Activated T-helper 2 cell treated with anti-CD3 and anti-CD28 coated beads, Interferon-gamma antibody, Interleukin-2, Interleukin-4, amounts not matched to agents 10 μg/mL and 5 μg/mL and 100 μg/mL, durations not matched to agents 14 hours and 24 hours and 36 hours (primary cell): ENCODE measurements at regions of chr12 and their contacts with region 1.

Region 1: DNA sequence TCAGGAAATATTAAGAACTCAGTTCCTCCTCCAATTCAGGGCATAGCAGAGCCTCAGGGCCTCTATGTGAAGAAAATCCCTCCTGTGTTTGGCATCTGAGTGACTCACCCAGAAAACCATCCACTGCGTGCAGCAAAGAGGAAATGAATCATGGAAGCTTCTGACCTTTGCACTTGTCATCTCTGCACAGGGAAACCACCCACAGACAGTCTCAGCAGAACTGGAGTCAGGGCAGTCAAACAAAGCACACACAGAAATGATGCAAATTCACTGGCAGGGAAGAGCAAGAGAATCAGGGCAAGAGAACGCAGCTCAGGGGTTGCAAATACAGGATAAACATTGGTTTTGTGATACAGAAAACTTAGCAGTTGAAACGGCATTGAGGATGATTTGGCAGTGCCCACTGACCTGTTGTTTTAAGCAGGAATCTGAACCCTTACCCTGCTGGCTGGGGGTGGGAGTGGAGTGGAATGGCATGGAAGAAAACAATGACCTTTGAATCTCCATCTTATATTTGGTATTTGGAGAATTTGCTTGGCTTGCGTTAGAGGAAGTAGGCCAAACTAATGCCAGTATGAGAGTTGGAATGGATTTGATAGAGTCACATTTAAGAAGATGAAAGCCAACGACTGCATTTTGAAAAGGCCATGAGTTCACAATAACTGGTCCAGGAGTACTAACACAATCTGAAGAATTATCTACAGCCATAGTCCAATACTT is 53.5 kb downstream of the PHLDA1 start:
- DNase-seq: peak; percentile 82
- H3K4me3 Mint-ChIP-seq: peak overlapping the region; percentile 67
- H3K27ac Mint-ChIP-seq: peak overlapping the region; percentile 96
- H3K4me1 Mint-ChIP-seq: peaks cover 64% of the 10 kb centered on the region
- H3K27me3 Mint-ChIP-seq: no peaks in the 10 kb centered on the region

Region 2: GRCh38 chr12:75511116-75512048 is 466.7 kb before region 1 on chr12 and contains the start of gene KRR1:
- intact Hi-C with region 1: loop called (anchors 2 kb)
- DNase-seq: peak; percentile 91
- H3K4me3 Mint-ChIP-seq: peak within 1 kb of the TSS; percentile 96
- H3K27ac Mint-ChIP-seq: peak within 1 kb of the TSS; percentile 98
- H3K4me1 Mint-ChIP-seq: peaks cover 30% of the 10 kb centered on the region
- H3K27me3 Mint-ChIP-seq: no peaks in the 10 kb centered on the region
- total RNA-seq, gene KRR1: 114 and 119 TPM in 2 replicates

Region 3: GRCh38 chr12:75738486-75738885 is 239.6 kb before region 1 on chr12:
- intact Hi-C with region 1: loop called (anchors 1 kb)
- DNase-seq: no peak
- H3K4me3 Mint-ChIP-seq: no peak overlapping the region
- H3K27ac Mint-ChIP-seq: peak overlapping the region; percentile 33
- H3K4me1 Mint-ChIP-seq: peaks cover 20% of the 10 kb centered on the region
- H3K27me3 Mint-ChIP-seq: peaks cover 23% of the 10 kb centered on the region

Region 4: DNA sequence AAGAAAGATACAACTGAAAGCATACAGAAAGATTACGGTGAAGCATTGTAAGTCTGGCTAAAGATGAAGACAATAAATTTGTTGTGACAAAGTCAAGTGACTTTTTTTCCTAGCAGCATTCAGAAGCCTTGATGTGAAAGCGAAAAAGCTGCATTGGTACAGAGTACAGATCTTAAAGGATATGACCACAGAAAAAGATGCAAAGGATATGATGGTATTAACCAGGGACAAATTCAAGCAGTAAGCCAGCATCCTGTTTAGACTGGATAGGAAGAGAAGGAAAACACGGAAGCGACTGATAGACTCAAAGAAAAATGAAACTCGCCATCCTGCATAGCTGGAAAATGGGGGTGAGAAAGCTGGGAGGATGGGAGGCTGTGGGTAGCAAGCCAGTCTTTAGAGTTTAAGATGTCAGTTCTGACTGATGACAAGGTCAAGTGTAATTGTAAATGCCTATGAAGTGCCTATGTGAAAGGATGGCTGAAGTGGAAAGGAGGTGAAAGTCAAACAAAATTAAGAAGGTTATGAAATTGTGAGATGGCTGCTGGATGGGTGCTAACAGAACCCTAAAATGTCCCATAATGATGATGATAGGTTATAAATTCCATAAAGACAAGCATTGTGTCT is 39.0 kb before region 1 on chr12:
- intact Hi-C with region 1: loop called (anchors 1 kb)
- DNase-seq: peak; percentile 20
- H3K4me3 Mint-ChIP-seq: no peak overlapping the region
- H3K27ac Mint-ChIP-seq: no peak overlapping the region
- H3K4me1 Mint-ChIP-seq: peaks cover 14% of the 10 kb centered on the region
- H3K27me3 Mint-ChIP-seq: no peaks in the 10 kb centered on the region

Region 5: DNA sequence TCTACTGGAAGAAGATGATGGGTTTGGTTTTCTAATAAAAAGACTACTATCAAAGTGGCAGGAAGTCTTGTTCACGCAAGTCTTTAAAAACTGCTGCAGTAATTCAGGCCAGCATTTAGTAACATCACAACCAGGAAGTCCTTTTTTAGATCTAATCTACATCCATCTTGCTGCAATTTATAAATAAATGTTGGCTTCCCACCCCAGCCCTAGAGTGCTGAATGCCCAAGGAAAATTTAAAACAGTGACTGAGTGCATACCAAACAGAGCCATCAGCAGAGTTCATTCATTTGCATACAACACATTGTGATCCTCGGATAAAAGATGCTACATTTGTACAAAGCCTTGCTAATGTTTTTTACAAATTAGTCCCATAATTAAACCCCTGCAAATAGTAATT is 18.6 kb before region 1 on chr12:
- intact Hi-C with region 1: loop called (anchors 1 kb)
- DNase-seq: no peak
- H3K4me3 Mint-ChIP-seq: no peak overlapping the region
- H3K27ac Mint-ChIP-seq: no peak overlapping the region
- H3K4me1 Mint-ChIP-seq: peaks cover 31% of the 10 kb centered on the region
- H3K27me3 Mint-ChIP-seq: no peaks in the 10 kb centered on the region

Region 6: GRCh38 chr12:76031537-76032073 is 53.5 kb after region 1 on chr12 and contains the start of gene PHLDA1:
- intact Hi-C with region 1: loop called (anchors 1 kb)
- DNase-seq: peak; percentile 94
- H3K4me3 Mint-ChIP-seq: peak within 1 kb of the TSS; percentile 97
- H3K27ac Mint-ChIP-seq: peak within 1 kb of the TSS; percentile 97
- H3K4me1 Mint-ChIP-seq: peaks cover 45% of the 10 kb centered on the region
- H3K27me3 Mint-ChIP-seq: no peaks in the 10 kb centered on the region
- total RNA-seq, gene PHLDA1: 43.2 and 44.2 TPM in 2 replicates